ENCODE measurements at regions of chr6 and their contacts with region 1.

Region 1: GRCh38 chr6:109440331-109441068 is at the starts of genes PPIL6 and SMPD2:
- DNase-seq: peak; percentile 88
- ATAC-seq: peak; percentile 82
- H3K4me3 Mint-ChIP-seq: peak within 1 kb of the TSS; percentile 92
- H3K27ac Mint-ChIP-seq: peak within 1 kb of the TSS; percentile 32; the same call in 1 of the 2 replicates
- H3K4me1 Mint-ChIP-seq: peaks cover 14% of the 10 kb centered on the region; the same call in 1 of the 2 replicates
- H3K27me3 Mint-ChIP-seq: peaks cover 7% of the 10 kb centered on the region
- CTCF ChIP-seq: peak; percentile 40; the same call in 1 of the 2 replicates
- total RNA-seq, gene PPIL6: 0.61 to 0.76 TPM (median 0.69 TPM) in 3 replicates
- total RNA-seq, gene SMPD2: 11.2 to 13.1 TPM (median 12.2 TPM) in 3 replicates

Region 2: GRCh38 chr6:109279628-109280027 is 160.9 kb before region 1 on chr6:
- CTCF ChIA-PET with region 1: no interaction called
- POLR2A ChIA-PET with region 1: no interaction called
- DNase-seq: no peak
- ATAC-seq: no peak
- H3K4me3 Mint-ChIP-seq: no peak overlapping the region
- H3K27ac Mint-ChIP-seq: no peak overlapping the region
- H3K4me1 Mint-ChIP-seq: peaks cover 2% of the 10 kb centered on the region
- H3K27me3 Mint-ChIP-seq: no peaks in the 10 kb centered on the region
- CTCF ChIP-seq: no peak

Region 3: DNA sequence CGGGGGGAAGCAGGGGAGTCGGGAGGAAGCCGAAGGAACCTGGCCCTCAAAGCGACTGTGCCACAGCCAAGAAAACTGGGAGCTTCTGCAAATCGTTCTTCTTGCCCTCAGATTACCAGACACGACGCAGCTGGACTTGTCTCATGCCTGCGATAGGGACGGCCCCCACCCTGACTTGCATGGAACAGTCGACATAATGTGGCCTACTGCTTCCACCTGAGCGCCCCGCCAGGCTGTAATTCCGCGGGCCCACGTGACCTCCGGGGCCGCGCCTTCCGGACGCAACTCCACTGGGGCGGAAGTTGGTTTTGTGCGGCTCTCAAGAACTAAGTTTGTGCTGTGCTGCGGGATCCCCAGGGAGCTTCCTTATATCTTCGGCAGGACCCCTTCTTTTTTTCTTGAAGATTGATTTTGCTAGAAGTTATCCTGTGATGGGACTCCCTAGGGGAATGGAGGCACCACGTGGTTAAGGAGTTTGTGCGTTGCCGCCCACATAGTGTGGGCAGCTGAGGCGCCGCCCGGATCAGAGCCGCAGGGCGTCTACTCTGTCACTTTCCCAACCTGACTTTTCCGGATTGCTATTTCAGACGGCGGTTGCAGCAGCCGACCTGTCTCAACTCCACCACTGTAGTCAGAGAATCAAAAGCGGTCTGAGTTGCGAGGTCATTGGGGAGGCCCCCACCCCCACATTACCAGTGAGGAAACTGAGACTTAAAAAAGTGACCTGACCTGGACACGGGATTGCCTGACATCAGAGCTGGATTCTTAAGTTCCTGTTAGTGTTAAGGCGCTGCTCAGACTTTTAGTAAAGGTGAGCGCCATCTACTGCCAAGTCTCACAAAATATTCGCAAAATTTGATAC is 57.7 kb before region 1 on chr6:
- CTCF ChIA-PET with region 1: interaction called, 15 read pairs
- POLR2A ChIA-PET with region 1: interaction called, 12 read pairs
- DNase-seq: peak; percentile 89
- ATAC-seq: peak; percentile 79
- H3K4me3 Mint-ChIP-seq: peak overlapping the region; percentile 92
- H3K27ac Mint-ChIP-seq: peak overlapping the region; percentile 99
- H3K4me1 Mint-ChIP-seq: peaks cover 28% of the 10 kb centered on the region
- H3K27me3 Mint-ChIP-seq: no peaks in the 10 kb centered on the region
- CTCF ChIP-seq: 0 out of 2 replicates have a peak, but pooled peaks have one; percentile 23

Region 4: GRCh38 chr6:109455502-109456282 is 15.2 kb after region 1 on chr6 and contains the start of gene MICAL1:
- CTCF ChIA-PET with region 1: interaction called, 24 read pairs
- POLR2A ChIA-PET with region 1: interaction called, 13 read pairs
- DNase-seq: peak; percentile 66
- ATAC-seq: peak; percentile 68
- H3K4me3 Mint-ChIP-seq: peak within 1 kb of the TSS; percentile 92
- H3K27ac Mint-ChIP-seq: peak within 1 kb of the TSS; percentile 42
- H3K4me1 Mint-ChIP-seq: peaks cover 47% of the 10 kb centered on the region
- H3K27me3 Mint-ChIP-seq: no peaks in the 10 kb centered on the region; the same call in 1 of the 2 replicates
- CTCF ChIP-seq: no peak
- total RNA-seq, gene MICAL1: 51.6 to 57.4 TPM (median 52.2 TPM) in 3 replicates

Region 5: GRCh38 chr6:109486069-109486468 is 45.6 kb after region 1 on chr6:
- CTCF ChIA-PET with region 1: interaction called, 10 read pairs
- POLR2A ChIA-PET with region 1: interaction called, 5 read pairs
- DNase-seq: no peak
- ATAC-seq: no peak
- H3K4me3 Mint-ChIP-seq: no peak overlapping the region
- H3K27ac Mint-ChIP-seq: no peak overlapping the region
- H3K4me1 Mint-ChIP-seq: peaks cover 41% of the 10 kb centered on the region
- H3K27me3 Mint-ChIP-seq: no peaks in the 10 kb centered on the region; the same call in 1 of the 2 replicates
- CTCF ChIP-seq: no peak

Measured in WTC11 (cell line).